Uterus (tissue), 4 donors: ENCODE measurements at regions of chr20 and their contacts with region 1.

Region 1: GRCh38 chr20:14203678-14204077 is 133.7 kb downstream of the FLRT3 start:
- DNase-seq: no peak
- H3K4me3 ChIP-seq: no peak overlapping the region
- H3K27ac ChIP-seq: no peak overlapping the region
- H3K4me1 ChIP-seq: no peaks in the 10 kb centered on the region
- H3K27me3 ChIP-seq: no peaks in the 10 kb centered on the region
- CTCF ChIP-seq: no peak
- POLR2A ChIP-seq: no peak

Region 2: DNA sequence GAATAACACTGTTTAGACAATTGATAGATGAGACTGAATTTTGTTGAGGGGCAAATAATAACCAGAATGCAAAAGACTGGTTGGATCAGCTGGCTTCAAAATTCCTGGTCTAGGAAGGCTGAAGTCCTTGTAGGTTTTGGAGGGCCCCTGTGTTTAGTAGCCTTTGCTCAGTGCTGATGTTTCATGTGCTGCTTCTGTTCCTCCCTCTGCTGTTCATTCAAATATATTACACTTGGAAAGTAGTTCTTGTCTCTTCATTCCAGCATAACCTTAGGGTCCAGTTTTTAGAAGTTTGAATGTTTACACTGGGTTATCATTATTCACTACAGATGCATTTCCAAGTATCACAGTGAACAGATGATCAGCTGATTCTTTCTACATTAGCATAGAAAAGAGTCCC is 61.2 kb after region 1 on chr20:
- intact Hi-C with region 1: loop called (anchors 10 kb)
- DNase-seq: no peak
- H3K4me3 ChIP-seq: no peak overlapping the region
- H3K27ac ChIP-seq: no peak overlapping the region
- H3K4me1 ChIP-seq: no peaks in the 10 kb centered on the region
- H3K27me3 ChIP-seq: no peaks in the 10 kb centered on the region
- CTCF ChIP-seq: no peak
- POLR2A ChIP-seq: no peak